ENCODE measurements at regions of chr14 and their contacts with region 1.

Region 1: DNA sequence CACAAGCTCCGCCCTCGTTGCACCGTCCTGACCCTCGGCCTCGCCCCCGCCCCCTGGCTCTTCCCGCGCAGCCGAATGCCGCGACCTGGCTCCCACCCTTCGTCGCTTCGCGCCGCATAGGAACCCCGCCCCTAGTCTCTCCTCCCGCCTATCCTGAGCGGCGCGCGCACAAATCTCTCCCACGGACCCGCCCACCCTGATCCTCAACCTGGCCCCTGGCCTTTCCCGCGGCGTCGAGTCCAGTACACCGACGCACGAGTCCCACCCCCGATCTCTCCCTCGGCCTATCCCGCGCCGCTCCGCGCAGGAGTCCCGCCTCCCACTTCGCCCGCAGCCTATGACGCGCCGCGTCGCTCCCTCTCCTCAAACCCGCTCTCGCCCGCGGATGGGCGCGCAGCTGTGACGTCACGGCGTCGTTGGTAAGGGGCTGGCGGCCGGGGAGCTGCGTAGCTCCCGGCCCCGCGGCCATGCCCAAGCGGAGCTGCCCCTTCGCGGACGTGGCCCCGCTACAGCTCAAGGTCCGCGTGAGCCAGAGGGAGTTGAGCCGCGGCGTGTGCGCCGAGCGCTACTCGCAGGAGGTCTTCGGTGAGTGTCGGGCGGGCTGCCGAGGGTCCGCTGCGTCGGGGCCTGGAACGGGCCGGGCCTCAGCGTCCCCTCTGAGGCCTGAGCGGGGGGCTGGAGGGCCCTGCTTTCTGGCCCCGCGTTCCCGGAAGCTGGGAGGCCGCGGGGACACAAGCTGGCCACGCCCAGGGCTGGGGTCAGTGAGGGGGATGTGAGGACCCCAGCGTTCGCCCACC is at the start of gene SIVA1:
- DNase-seq: peak; percentile 99
- H3K4me3 ChIP-seq: peak within 1 kb of the TSS; percentile 67 to 98 (median 97)
- H3K27ac ChIP-seq: peak within 1 kb of the TSS; percentile 63
- H3K4me1 ChIP-seq: peaks cover 37% of the 10 kb centered on the region
- H3K27me3 ChIP-seq: no peaks in the 10 kb centered on the region
- CTCF ChIP-seq: no peak
- total RNA-seq, gene SIVA1: 43.3 to 56.1 TPM

Region 2: GRCh38 chr14:104598039-104598942 is 154.6 kb before region 1 on chr14:
- CTCF ChIA-PET with region 1: no interaction called
- dilution Hi-C with region 1: loop called (anchors 10 kb)
- in situ Hi-C with region 1: no loop called
- intact Hi-C with region 1: no loop called
- DNase-seq: no peak
- H3K4me3 ChIP-seq: no peak overlapping the region
- H3K27ac ChIP-seq: no peak overlapping the region
- H3K4me1 ChIP-seq: no peaks in the 10 kb centered on the region
- H3K27me3 ChIP-seq: no peaks in the 10 kb centered on the region
- CTCF ChIP-seq: no peak

Region 3: GRCh38 chr14:104723648-104724406 is 29.1 kb before region 1 on chr14 and contains the start of gene ADSS1:
- CTCF ChIA-PET with region 1: interaction called, 4 read pairs
- dilution Hi-C with region 1: no loop called
- in situ Hi-C with region 1: no loop called
- intact Hi-C with region 1: loop called (anchors 1 kb)
- DNase-seq: peak; percentile 35
- H3K4me3 ChIP-seq: peak within 1 kb of the TSS; percentile 49 to 63 (median 50)
- H3K27ac ChIP-seq: no peak within 1 kb of the TSS
- H3K4me1 ChIP-seq: peaks cover 19% of the 10 kb centered on the region
- H3K27me3 ChIP-seq: no peaks in the 10 kb centered on the region
- CTCF ChIP-seq: peak; percentile 59 to 94
- total RNA-seq, gene ADSS1: 1.5 to 3.8 TPM

Region 4: GRCh38 chr14:104820669-104821228 is 67.8 kb after region 1 on chr14:
- CTCF ChIA-PET with region 1: interaction called, 7 read pairs
- dilution Hi-C with region 1: loop called (anchors 5 kb)
- in situ Hi-C with region 1: loop called in 1 of 2 experiments (anchors 5 kb)
- intact Hi-C with region 1: no loop called
- DNase-seq: peak; percentile 62
- H3K4me3 ChIP-seq: no peak overlapping the region
- H3K27ac ChIP-seq: no peak overlapping the region
- H3K4me1 ChIP-seq: peaks cover 14% of the 10 kb centered on the region
- H3K27me3 ChIP-seq: no peaks in the 10 kb centered on the region
- CTCF ChIP-seq: peak; percentile 40 to 64

Region 5: GRCh38 chr14:104968153-104968527 is 215.2 kb after region 1 on chr14:
- CTCF ChIA-PET with region 1: no interaction called
- dilution Hi-C with region 1: no loop called
- in situ Hi-C with region 1: no loop called
- intact Hi-C with region 1: loop called (anchors 5 kb)
- DNase-seq: peak; percentile 79
- H3K4me3 ChIP-seq: peak overlapping the region; percentile 1 to 43 (median 24)
- H3K27ac ChIP-seq: peak overlapping the region; percentile 98
- H3K4me1 ChIP-seq: peaks cover 70% of the 10 kb centered on the region
- H3K27me3 ChIP-seq: no peaks in the 10 kb centered on the region
- CTCF ChIP-seq: no peak